Adrenal gland (tissue), 19 donors: ENCODE measurements at regions of chr6 and their contacts with region 1.

Region 1: DNA sequence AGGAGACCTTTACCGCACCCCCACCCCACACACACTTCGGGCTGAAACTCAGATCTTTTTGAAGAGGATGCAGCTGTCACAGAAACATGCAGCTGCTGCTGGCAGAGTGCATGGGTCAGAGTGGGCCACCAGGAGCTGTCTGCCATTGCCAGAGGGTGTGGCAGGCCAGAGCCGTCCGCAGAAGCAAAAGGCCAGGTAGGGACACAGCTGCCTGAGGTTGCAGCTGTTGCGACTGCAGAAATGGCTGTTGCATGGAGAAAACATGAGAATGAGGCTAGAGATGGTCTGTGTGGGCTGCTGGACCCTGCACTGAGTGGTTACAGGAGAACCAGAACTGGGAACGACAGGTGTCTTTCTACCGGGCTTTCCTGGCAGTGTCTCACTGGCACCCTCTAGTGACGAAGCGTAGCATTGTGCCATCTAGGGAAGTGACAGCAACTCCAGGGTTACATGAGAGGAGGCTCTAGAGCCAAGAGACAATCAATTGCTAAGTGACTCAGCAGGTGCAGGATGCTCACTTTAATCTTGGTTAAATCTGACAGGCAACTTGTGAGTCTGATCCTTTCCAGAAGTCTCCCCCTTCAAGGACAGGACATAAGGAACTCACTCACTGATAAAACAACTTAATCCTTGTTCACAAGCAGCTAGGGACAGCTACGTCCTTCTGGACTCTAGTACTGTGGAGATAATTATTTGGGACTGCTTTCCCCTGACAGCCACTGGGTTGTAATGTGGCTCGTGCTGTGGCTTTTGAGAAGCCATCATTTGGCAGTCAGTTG is 29.1 kb upstream of the SERPINB9 start:
- DNase-seq: peak; percentile 80 to 97 (median 86)
- H3K4me3 ChIP-seq: no peak overlapping the region
- H3K27ac ChIP-seq: peak overlapping the region in 1 of 5 donors; percentile 56
- H3K4me1 ChIP-seq: peaks cover 0 to 6% of the 10 kb centered on the region in 2 donors
- H3K27me3 ChIP-seq: no peaks in the 10 kb centered on the region
- CTCF ChIP-seq: peak; percentile 83 to 96 (median 94)
- POLR2A ChIP-seq: no peak

Region 2: DNA sequence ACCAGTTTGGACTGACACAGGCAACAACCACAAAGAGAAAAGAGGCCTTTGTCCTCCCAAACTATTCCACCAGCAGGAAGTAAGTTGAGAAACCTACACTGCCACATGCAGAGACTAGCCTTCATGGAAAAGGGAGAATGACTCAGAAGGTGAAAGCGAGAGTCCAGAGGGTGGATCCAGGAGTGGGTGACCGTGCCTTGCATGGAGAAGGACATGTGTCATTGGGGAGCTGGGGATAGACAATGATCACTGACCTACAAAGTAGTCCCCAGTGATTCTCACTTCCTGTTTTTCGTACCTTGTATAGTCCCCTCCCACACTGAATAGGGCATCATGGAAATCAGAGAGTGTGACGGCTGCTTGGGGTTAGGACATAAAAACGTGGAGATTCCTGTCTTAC is 273.4 kb before region 1 on chr6:
- intact Hi-C with region 1: no loop called
- DNase-seq: no peak
- H3K4me3 ChIP-seq: no peak overlapping the region
- H3K27ac ChIP-seq: no peak overlapping the region
- H3K4me1 ChIP-seq: no peaks in the 10 kb centered on the region
- H3K27me3 ChIP-seq: no peaks in the 10 kb centered on the region
- CTCF ChIP-seq: no peak
- POLR2A ChIP-seq: no peak

Region 3: DNA sequence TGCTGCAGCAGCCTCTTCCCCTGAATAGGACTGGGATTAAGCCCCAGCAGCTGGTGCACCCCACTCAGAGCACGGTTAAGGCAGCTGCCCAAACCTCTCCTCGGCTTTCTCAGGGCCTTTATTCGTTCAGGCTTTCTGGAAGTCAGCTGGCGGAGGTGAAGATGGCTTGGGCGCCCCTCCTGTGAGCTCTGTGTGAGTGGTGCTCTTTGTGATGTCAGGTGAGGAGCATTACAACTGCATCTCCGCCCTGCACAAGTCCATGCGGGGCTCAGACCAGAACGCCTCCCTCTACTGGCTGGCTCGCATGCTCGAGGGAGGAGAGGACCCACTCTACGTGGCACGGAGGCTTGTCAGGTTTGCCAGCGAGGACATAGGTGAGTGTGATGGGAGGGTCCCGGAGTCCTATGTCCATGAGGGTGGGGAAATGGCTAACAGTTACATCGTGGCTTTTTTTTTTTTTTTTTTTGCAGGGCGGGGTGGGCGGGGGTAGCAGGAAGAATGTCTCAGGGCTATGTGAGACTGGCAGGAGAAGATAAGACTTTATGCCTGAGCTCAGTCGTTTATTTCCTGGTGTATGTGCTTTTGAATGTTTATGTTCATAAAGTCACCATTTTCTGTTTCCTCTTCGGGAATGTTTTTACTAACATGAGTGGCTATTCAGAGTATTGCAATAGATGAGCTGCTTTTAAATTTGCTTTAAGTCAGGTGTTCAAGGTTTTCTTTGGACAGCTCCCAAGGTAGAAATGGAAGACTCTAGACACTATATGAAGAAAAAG is 148.8 kb before region 1 on chr6:
- intact Hi-C with region 1: loop called in 1 of 2 experiments (anchors 10 kb)
- DNase-seq: peak in 1 of 7 donors; percentile 13
- H3K4me3 ChIP-seq: no peak overlapping the region
- H3K27ac ChIP-seq: no peak overlapping the region
- H3K4me1 ChIP-seq: no peaks in the 10 kb centered on the region
- H3K27me3 ChIP-seq: no peaks in the 10 kb centered on the region
- CTCF ChIP-seq: no peak
- POLR2A ChIP-seq: no peak

Region 4: GRCh38 chr6:2848851-2849250 is 83.3 kb before region 1 on chr6:
- intact Hi-C with region 1: loop called (anchors 5 kb)
- DNase-seq: no peak
- H3K4me3 ChIP-seq: no peak overlapping the region
- H3K27ac ChIP-seq: no peak overlapping the region
- H3K4me1 ChIP-seq: peaks cover 11 to 24% of the 10 kb centered on the region in 2 donors
- H3K27me3 ChIP-seq: no peaks in the 10 kb centered on the region
- CTCF ChIP-seq: no peak
- POLR2A ChIP-seq: no peak

Region 5: DNA sequence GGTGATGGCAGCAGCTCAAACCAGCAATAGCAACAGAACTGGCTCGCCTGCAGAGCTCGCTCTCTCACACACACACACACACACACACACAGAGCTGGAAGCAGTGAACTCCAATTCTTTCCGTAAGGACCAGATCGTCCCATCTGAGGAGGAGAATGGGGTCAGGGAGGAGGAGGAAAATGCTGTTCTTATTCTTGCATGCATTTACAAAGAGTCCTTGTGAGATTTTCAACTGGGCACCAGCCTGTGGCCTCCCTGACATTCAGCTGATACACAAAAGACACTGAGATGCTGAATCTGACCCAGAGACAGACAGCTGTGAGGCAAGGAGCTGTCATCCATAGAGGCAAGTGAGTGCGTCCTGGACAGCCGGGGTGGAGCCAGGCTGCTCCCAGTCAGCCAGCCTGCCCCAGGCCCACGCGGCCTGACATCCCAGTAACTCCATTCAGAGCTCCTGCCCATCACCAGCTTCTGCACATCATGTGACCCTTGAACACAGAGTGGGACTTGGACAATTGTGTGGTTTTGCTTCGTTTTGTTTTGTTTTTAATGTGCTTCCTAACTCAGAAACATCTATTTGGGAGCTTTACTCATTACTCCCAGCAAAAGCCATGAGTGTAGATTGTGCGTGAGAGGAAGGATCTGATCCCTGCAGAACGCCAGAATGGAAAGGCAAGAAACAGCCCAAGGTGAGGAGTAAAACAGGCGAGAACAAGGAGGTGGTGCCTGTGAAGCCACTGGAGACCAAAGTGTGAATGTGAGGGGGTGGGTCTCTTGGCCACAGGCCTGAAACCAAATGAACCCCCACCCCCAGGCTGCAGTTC is 31.1 kb before region 1 on chr6:
- intact Hi-C with region 1: loop called in 1 of 2 experiments (anchors 2 kb)
- DNase-seq: peak in 4 of 7 donors; percentile 26 to 59 (median 30)
- H3K4me3 ChIP-seq: peak overlapping the region in 1 of 4 donors; percentile 78
- H3K27ac ChIP-seq: peak overlapping the region in 2 of 5 donors; percentile 95 to 96
- H3K4me1 ChIP-seq: peaks cover 14 to 40% of the 10 kb centered on the region in 2 donors
- H3K27me3 ChIP-seq: no peaks in the 10 kb centered on the region
- CTCF ChIP-seq: no peak
- POLR2A ChIP-seq: no peak

Region 6: DNA sequence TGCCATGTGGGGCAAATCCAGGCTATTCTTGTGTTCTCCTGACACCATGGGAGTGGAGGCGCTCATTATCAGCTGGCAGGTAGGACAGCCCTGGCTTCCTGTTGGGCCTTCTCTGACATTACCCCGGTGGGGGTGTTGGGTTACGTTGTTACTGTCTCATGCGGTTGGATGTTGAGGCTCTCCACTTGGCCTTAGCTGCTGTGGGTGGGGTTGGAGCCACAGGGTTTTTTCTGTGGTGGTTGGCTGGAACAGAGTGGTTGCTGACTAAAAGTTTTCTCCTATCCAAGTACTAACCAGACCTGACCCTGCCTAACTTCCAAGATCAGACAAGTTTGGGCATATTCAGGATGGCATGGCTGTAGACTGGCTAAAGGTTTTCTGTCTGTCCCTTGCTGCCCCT is 156.3 kb after region 1 on chr6:
- intact Hi-C with region 1: no loop called
- DNase-seq: no peak
- H3K4me3 ChIP-seq: no peak overlapping the region
- H3K27ac ChIP-seq: peak overlapping the region in 1 of 5 donors; percentile 36
- H3K4me1 ChIP-seq: no peaks in the 10 kb centered on the region
- H3K27me3 ChIP-seq: no peaks in the 10 kb centered on the region
- CTCF ChIP-seq: no peak
- POLR2A ChIP-seq: no peak